ENCODE measurements at regions of chr12 and their contacts with region 1.

Region 1: GRCh38 chr12:31702047-31702446 is 26.8 kb downstream of the AMN1 start:
- DNase-seq: no peak
- H3K4me3 ChIP-seq: no peak overlapping the region
- H3K27ac ChIP-seq: no peak overlapping the region
- H3K27me3 ChIP-seq: no peaks in the 10 kb centered on the region
- CTCF ChIP-seq: peak; percentile 16; the same call in 1 of the 2 replicates

Region 2: DNA sequence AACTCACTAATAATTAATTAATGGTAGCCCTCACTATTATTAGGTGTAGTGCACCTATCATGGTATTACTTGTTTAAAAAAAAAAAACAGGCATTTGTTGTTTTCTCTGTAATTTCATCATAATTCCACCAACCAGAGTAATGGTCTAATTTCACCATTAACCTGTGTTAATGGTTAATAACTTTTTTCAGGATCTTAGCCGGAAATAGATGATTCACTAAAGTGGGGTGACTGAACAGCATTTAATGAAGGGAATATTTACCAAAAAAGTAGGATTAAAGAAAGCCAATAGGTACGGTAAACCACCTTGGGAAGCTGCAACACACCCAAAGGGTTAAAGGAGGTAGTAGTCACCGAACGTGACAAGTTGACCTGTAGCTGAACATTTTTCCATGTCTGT is 29.5 kb before region 1 on chr12:
- CTCF ChIA-PET with region 1: interaction called, 11 read pairs
- POLR2A ChIA-PET with region 1: no interaction called
- DNase-seq: no peak
- H3K4me3 ChIP-seq: no peak overlapping the region
- H3K27ac ChIP-seq: no peak overlapping the region
- H3K27me3 ChIP-seq: no peaks in the 10 kb centered on the region
- CTCF ChIP-seq: no peak